Adrenal gland (tissue), 19 donors: ENCODE measurements at regions of chr9 and their contacts with region 1.

Region 1: GRCh38 chr9:91111876-91112275 is 249.8 kb downstream of the AUH start:
- DNase-seq: no peak
- H3K4me3 ChIP-seq: no peak overlapping the region
- H3K27ac ChIP-seq: no peak overlapping the region
- H3K4me1 ChIP-seq: no peaks in the 10 kb centered on the region
- H3K27me3 ChIP-seq: no peaks in the 10 kb centered on the region
- CTCF ChIP-seq: no peak
- POLR2A ChIP-seq: no peak

Region 2: GRCh38 chr9:91060503-91061343 is 51.2 kb before region 1 on chr9:
- intact Hi-C with region 1: loop called in 1 of 2 experiments (anchors 5 kb)
- DNase-seq: peak; percentile 32 to 81 (median 74)
- H3K4me3 ChIP-seq: no peak overlapping the region
- H3K27ac ChIP-seq: peak overlapping the region in 3 of 5 donors; percentile 29 to 68 (median 62)
- H3K4me1 ChIP-seq: peaks cover 0 to 19% of the 10 kb centered on the region in 2 donors
- H3K27me3 ChIP-seq: no peaks in the 10 kb centered on the region
- CTCF ChIP-seq: no peak
- POLR2A ChIP-seq: no peak

Region 3: DNA sequence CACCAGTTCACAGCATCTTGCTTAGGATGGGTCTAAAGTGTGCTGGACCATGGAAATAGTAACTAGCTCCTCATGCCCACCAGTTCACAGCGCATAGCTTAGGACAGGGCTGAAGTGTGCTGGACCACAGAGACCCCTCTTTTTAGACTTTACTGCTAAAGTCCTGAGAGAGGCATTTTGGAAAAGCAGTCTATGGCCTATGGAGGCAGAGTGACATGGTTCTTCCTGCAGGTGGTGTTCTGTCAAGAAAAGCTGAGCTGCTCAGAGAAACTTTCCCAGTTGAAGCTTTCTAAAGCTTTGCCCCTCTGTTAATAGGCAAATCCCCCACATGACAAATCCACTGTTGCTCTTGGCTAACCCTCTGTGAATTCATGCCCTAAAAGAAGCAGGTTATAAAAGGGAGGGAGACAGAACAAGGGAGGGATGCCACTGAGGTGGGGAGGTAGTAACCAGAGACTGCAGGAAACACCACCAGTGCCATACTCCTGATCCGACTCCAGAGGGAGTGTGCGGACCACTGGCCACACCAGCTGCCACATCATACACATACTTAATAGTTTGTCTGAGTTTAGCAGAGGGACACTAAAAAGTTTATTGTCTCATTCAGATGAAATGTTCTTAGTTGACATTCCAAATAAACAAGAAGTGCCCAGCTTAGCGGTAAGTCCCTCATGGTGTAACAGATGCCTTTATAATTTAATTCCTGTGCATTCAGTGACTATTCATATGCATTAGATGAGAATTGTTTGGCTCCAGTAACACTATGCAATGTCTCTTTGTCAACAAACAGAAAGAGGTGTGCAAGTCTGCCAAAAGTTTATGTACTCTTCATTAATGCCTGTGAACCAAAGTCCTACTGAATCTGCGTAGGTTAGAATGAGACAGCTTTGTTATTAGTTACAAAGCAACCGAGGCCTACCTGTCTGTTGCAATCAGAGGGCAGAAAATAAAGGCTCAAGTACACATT is 547.9 kb after region 1 on chr9:
- intact Hi-C with region 1: no loop called
- DNase-seq: peak in 1 of 7 donors; percentile 31
- H3K4me3 ChIP-seq: no peak overlapping the region
- H3K27ac ChIP-seq: no peak overlapping the region
- H3K4me1 ChIP-seq: no peaks in the 10 kb centered on the region
- H3K27me3 ChIP-seq: no peaks in the 10 kb centered on the region
- CTCF ChIP-seq: peak in 5 of 6 experiments; percentile 15 to 35 (median 23)
- POLR2A ChIP-seq: no peak

Region 4: GRCh38 chr9:91945277-91946085 is 833.6 kb after region 1 on chr9:
- intact Hi-C with region 1: no loop called
- DNase-seq: peak in 5 of 7 donors; percentile 16 to 65 (median 39)
- H3K4me3 ChIP-seq: peak overlapping the region in 1 of 4 donors; percentile 18
- H3K27ac ChIP-seq: peak overlapping the region in 2 of 5 donors; percentile 31 to 67
- H3K4me1 ChIP-seq: peaks cover 0 to 21% of the 10 kb centered on the region in 2 donors
- H3K27me3 ChIP-seq: peaks cover 14% of the 10 kb centered on the region
- CTCF ChIP-seq: no peak
- POLR2A ChIP-seq: no peak